SK-N-SH (cell line): ENCODE measurements at regions of chr2 and their contacts with region 1.

Region 1: DNA sequence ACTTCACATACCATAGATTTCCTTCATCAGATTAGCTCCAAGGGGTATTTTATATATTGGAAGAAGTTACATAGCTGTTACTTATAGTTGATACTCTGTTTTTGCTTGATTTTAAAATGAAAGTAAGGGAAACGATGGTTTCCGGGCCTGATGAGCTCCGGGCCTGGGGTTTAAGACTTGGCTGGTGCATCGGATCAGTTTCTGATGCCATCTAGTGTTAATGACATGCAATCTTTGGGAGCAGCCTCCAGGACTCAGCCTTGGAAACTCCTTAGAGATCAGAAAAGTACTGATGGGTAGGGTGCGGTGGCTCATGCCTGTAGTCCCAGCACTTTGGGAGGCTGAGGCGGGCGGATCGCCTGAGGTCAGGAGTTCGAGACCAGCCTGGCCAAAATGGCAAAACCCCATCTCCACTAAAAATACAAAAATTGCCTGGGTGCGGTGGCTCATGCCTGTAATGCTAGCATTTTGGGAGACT is 47.1 kb upstream of the CNOT11 start:
- DNase-seq: peak; percentile 76
- H3K4me3 ChIP-seq: peak overlapping the region; percentile 17 to 53; a peak in 2 of 4 replicates
- H3K27ac ChIP-seq: peak overlapping the region; percentile 29 to 48; a peak in 3 of 4 replicates
- H3K4me1 ChIP-seq: no peaks in the 10 kb centered on the region
- H3K27me3 ChIP-seq: no peaks in the 10 kb centered on the region
- CTCF ChIP-seq: peak; percentile 72
- EP300 ChIP-seq: no peak
- RAD21 ChIP-seq: peak; percentile 79

Region 2: DNA sequence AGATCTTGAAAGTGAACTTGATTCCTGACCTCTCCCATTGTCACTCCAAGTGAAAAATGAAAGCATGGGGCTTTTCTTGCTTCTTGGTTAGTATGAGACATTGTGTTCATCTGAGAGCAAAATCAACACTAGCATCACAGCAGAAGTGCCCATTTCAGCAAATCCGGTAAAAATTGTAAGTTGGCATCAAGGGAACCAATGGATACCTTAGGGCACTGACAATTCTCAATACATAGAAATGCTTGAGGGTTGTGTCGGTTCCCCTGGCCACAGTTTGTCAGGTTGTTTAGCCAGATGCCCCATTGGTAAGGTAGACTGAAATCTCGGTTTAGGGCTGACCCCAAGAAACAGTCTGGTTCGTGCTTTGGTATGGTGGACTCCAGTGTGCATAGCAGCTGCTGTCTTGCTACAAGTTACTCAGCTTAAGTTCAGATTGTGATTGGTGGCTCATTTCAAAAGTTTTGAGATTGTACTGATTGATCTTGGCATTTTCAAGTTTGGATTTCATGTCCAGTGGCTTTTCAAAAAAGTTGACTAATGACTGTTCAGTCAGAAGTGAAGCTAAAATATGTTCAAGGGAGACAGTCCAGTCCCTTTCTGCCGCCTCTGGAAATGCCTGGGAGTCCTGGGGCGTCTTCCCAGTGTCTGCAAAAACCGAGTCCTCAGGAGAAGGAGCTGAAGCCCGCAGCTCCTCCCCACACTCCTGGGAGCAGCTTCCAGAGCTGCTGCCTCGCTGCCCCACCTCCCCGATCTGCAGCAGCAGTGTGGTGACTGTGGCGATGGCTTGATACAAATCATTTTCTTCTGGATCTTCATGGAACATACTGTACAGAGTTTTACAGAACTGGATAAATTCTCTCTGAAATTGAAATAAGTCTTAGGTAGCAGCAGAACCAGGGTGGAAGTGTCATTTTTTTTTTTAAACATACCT is 197.9 kb before region 1 on chr2:
- CTCF ChIA-PET with region 1: interaction called, 15 read pairs
- POLR2A ChIA-PET with region 1: no interaction called
- DNase-seq: no peak
- H3K4me3 ChIP-seq: no peak overlapping the region
- H3K27ac ChIP-seq: 0 out of 4 replicates have a peak overlapping the region, but pooled peaks of 1 of the 2 experiments have one; percentile 10
- H3K4me1 ChIP-seq: peaks cover 8 to 19% of the 10 kb centered on the region in 2 experiments; a peak in 3 of 4 replicates
- H3K27me3 ChIP-seq: no peaks in the 10 kb centered on the region
- CTCF ChIP-seq: no peak
- EP300 ChIP-seq: no peak
- RAD21 ChIP-seq: no peak

Region 3: DNA sequence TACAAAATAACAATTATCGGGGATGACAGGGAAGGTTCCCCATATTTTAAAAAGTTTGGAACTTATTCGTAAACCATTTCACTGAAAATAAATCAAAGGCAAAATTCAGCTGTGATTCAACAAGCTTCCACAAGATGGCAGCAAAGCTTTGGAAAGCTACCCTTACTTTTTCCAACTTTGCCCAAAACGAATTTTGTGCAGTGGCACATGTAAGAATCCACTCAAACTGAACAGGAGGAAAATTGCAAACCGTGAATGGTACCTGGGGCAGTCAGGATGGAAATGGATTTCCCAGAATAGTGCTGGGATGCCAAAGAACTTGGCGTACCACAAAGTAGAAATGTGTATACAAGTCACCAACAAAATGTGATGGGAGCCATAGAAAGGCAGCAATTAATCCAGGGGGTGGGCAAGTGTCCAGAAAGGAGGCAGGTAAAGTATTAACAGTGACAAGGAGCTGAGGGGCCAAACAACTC is 192.8 kb before region 1 on chr2:
- CTCF ChIA-PET with region 1: interaction called, 15 read pairs
- POLR2A ChIA-PET with region 1: no interaction called
- DNase-seq: peak; percentile 45
- H3K4me3 ChIP-seq: no peak overlapping the region
- H3K27ac ChIP-seq: no peak overlapping the region
- H3K4me1 ChIP-seq: no peaks in the 10 kb centered on the region; a peak in 1 of 4 replicates
- H3K27me3 ChIP-seq: no peaks in the 10 kb centered on the region
- CTCF ChIP-seq: peak; percentile 90
- EP300 ChIP-seq: no peak
- RAD21 ChIP-seq: peak; percentile 85

Region 4: GRCh38 chr2:101188683-101189405 is 16.7 kb before region 1 on chr2:
- CTCF ChIA-PET with region 1: interaction called, 44 read pairs
- POLR2A ChIA-PET with region 1: no interaction called
- DNase-seq: peak; percentile 74
- H3K4me3 ChIP-seq: no peak overlapping the region
- H3K27ac ChIP-seq: no peak overlapping the region
- H3K4me1 ChIP-seq: peaks cover 0 to 2% of the 10 kb centered on the region in 2 experiments; a peak in 1 of 4 replicates
- H3K27me3 ChIP-seq: no peaks in the 10 kb centered on the region
- CTCF ChIP-seq: peak; percentile 70
- EP300 ChIP-seq: no peak
- RAD21 ChIP-seq: peak; percentile 67

Region 5: GRCh38 chr2:101219246-101219645 is 13.7 kb after region 1 on chr2:
- CTCF ChIA-PET with region 1: interaction called, 40 read pairs
- POLR2A ChIA-PET with region 1: no interaction called
- DNase-seq: no peak
- H3K4me3 ChIP-seq: no peak overlapping the region
- H3K27ac ChIP-seq: no peak overlapping the region
- H3K4me1 ChIP-seq: no peaks in the 10 kb centered on the region
- H3K27me3 ChIP-seq: no peaks in the 10 kb centered on the region
- CTCF ChIP-seq: no peak
- EP300 ChIP-seq: no peak
- RAD21 ChIP-seq: no peak